ENCODE measurements at regions of chr15 and their contacts with region 1.

Region 1: GRCh38 chr15:33700695-33701304 is 267.5 kb upstream of the CHRM5 start:
- DNase-seq: peak; percentile 33 to 51 (median 42)
- H3K4me3 ChIP-seq: no peak overlapping the region
- H3K4me3 Mint-ChIP-seq: no peak overlapping the region
- H3K27ac ChIP-seq: no peak overlapping the region
- H3K27ac Mint-ChIP-seq: no peak overlapping the region
- H3K4me1 ChIP-seq: no peaks in the 10 kb centered on the region
- H3K4me1 Mint-ChIP-seq: peaks cover 0 to 4% (median under 1%) of the 10 kb centered on the region in 4 donors
- H3K27me3 ChIP-seq: no peaks in the 10 kb centered on the region
- H3K27me3 Mint-ChIP-seq: peaks cover 2 to 9% of the 10 kb centered on the region in 2 donors

Region 2: GRCh38 chr15:32657198-32657883 is 1043.5 kb before region 1 on chr15:
- CTCF ChIA-PET with region 1: interaction called, 30 read pairs
- POLR2A ChIA-PET with region 1: no interaction called
- intact Hi-C with region 1: loop called (anchors 1 kb)
- DNase-seq: peak in 3 of 5 donors; percentile 9 to 18 (median 15)
- H3K4me3 ChIP-seq: no peak overlapping the region
- H3K4me3 Mint-ChIP-seq: peak overlapping the region; percentile 3 to 74 (median 50)
- H3K27ac ChIP-seq: no peak overlapping the region
- H3K27ac Mint-ChIP-seq: peak overlapping the region in 6 of 7 donors; percentile 9 to 50 (median 37)
- H3K4me1 ChIP-seq: peaks cover 12% of the 10 kb centered on the region
- H3K4me1 Mint-ChIP-seq: peaks cover 8 to 10% (median 10%) of the 10 kb centered on the region in 4 donors
- H3K27me3 ChIP-seq: no peaks in the 10 kb centered on the region
- H3K27me3 Mint-ChIP-seq: no peaks in the 10 kb centered on the region

Region 3: GRCh38 chr15:32664796-32665195 is 1036.0 kb before region 1 on chr15:
- CTCF ChIA-PET with region 1: interaction called, 30 read pairs
- POLR2A ChIA-PET with region 1: no interaction called
- intact Hi-C with region 1: loop called (anchors 1 kb)
- DNase-seq: no peak
- H3K4me3 ChIP-seq: no peak overlapping the region
- H3K4me3 Mint-ChIP-seq: no peak overlapping the region
- H3K27ac ChIP-seq: no peak overlapping the region
- H3K27ac Mint-ChIP-seq: no peak overlapping the region
- H3K4me1 ChIP-seq: no peaks in the 10 kb centered on the region
- H3K4me1 Mint-ChIP-seq: peaks cover 5 to 6% (median 5%) of the 10 kb centered on the region in 4 donors
- H3K27me3 ChIP-seq: no peaks in the 10 kb centered on the region
- H3K27me3 Mint-ChIP-seq: no peaks in the 10 kb centered on the region

Region 4: GRCh38 chr15:33086507-33087121 is 614.2 kb before region 1 on chr15:
- CTCF ChIA-PET with region 1: interaction called, 11 read pairs
- POLR2A ChIA-PET with region 1: no interaction called
- intact Hi-C with region 1: no loop called
- DNase-seq: peak in 4 of 5 donors; percentile 9 to 59 (median 44)
- H3K4me3 ChIP-seq: no peak overlapping the region
- H3K4me3 Mint-ChIP-seq: peak overlapping the region in 4 of 8 donors; percentile 55 to 65 (median 62)
- H3K27ac ChIP-seq: no peak overlapping the region
- H3K27ac Mint-ChIP-seq: peak overlapping the region in 3 of 7 donors; percentile 41 to 61 (median 60)
- H3K4me1 ChIP-seq: peaks cover 6% of the 10 kb centered on the region
- H3K4me1 Mint-ChIP-seq: peaks cover 0 to 34% (median 0%) of the 10 kb centered on the region in 4 donors
- H3K27me3 ChIP-seq: no peaks in the 10 kb centered on the region
- H3K27me3 Mint-ChIP-seq: peaks cover 0 to 3% of the 10 kb centered on the region in 2 donors

Region 5: GRCh38 chr15:33215941-33216872 is 484.6 kb before region 1 on chr15:
- CTCF ChIA-PET with region 1: no interaction called
- POLR2A ChIA-PET with region 1: no interaction called
- intact Hi-C with region 1: loop called (anchors 1 kb)
- DNase-seq: peak in 3 of 5 donors; percentile 15 to 38 (median 32)
- H3K4me3 ChIP-seq: no peak overlapping the region
- H3K4me3 Mint-ChIP-seq: no peak overlapping the region
- H3K27ac ChIP-seq: no peak overlapping the region
- H3K27ac Mint-ChIP-seq: no peak overlapping the region
- H3K4me1 ChIP-seq: no peaks in the 10 kb centered on the region
- H3K4me1 Mint-ChIP-seq: no peaks in the 10 kb centered on the region
- H3K27me3 ChIP-seq: no peaks in the 10 kb centered on the region
- H3K27me3 Mint-ChIP-seq: peaks cover 0 to 2% of the 10 kb centered on the region in 2 donors

Region 6: DNA sequence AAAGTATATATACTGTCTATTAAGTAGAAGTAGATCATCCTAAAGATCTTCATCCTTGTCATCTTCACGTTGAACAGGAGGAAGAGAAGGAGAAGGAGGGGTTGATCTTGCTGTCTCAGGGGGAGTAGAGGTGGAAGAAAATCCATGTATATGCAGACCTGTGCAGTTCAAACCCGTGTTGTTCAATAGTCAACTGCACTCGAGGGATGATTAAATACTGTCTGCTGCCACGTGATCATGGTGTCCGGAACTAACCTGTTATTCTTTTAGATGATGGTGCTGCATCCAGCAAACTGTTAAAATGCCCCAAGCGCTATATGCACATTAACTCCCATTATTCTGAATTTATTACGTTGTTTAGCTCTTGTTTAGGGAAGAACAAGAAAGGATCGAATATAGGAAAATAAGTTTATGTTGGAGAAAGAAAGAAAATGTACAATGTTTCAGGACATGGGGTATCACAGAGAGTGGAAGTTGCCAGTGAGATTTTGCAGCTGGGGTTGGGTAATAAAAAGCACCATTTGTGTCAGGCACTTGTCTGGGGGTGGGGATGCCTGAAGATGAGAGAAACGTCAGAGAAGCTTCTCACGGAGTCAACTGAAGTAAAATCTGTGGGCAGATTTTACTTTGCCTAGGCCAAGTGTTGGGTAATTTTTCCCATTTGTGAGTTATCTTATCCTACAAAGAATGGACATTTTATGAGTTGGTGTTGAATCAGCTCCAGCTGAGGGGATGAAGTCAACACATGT is 160.8 kb before region 1 on chr15:
- CTCF ChIA-PET with region 1: no interaction called
- POLR2A ChIA-PET with region 1: no interaction called
- intact Hi-C with region 1: no loop called
- DNase-seq: no peak
- H3K4me3 ChIP-seq: no peak overlapping the region
- H3K4me3 Mint-ChIP-seq: no peak overlapping the region
- H3K27ac ChIP-seq: no peak overlapping the region
- H3K27ac Mint-ChIP-seq: no peak overlapping the region
- H3K4me1 ChIP-seq: no peaks in the 10 kb centered on the region
- H3K4me1 Mint-ChIP-seq: no peaks in the 10 kb centered on the region
- H3K27me3 ChIP-seq: no peaks in the 10 kb centered on the region
- H3K27me3 Mint-ChIP-seq: peaks cover 0 to 3% of the 10 kb centered on the region in 2 donors

Region 7: GRCh38 chr15:33722005-33722672 is 21.3 kb after region 1 on chr15:
- CTCF ChIA-PET with region 1: interaction called, 10 read pairs
- POLR2A ChIA-PET with region 1: no interaction called
- intact Hi-C with region 1: no loop called
- DNase-seq: no peak
- H3K4me3 ChIP-seq: no peak overlapping the region
- H3K4me3 Mint-ChIP-seq: no peak overlapping the region
- H3K27ac ChIP-seq: no peak overlapping the region
- H3K27ac Mint-ChIP-seq: peak overlapping the region in 1 of 7 donors; percentile 13
- H3K4me1 ChIP-seq: no peaks in the 10 kb centered on the region
- H3K4me1 Mint-ChIP-seq: no peaks in the 10 kb centered on the region
- H3K27me3 ChIP-seq: no peaks in the 10 kb centered on the region
- H3K27me3 Mint-ChIP-seq: peaks cover 1 to 8% of the 10 kb centered on the region in 2 donors

Measured in CD4-positive, alpha-beta memory T cell (primary cell).